Activated T-helper 1 cell treated with anti-CD3 and anti-CD28 coated beads, Interleukin-12 subunit alpha, Interleukin-12 subunit beta, Interleukin-2, Interleukin-4 antibody, amounts not matched to agents 30 ng/mL and 10 ng/mL and 1 ng/mL, durations not matched to agents 14 hours and 24 hours and 36 hours (primary cell): ENCODE measurements at regions of chr4 and their contacts with region 1.

Region 1: DNA sequence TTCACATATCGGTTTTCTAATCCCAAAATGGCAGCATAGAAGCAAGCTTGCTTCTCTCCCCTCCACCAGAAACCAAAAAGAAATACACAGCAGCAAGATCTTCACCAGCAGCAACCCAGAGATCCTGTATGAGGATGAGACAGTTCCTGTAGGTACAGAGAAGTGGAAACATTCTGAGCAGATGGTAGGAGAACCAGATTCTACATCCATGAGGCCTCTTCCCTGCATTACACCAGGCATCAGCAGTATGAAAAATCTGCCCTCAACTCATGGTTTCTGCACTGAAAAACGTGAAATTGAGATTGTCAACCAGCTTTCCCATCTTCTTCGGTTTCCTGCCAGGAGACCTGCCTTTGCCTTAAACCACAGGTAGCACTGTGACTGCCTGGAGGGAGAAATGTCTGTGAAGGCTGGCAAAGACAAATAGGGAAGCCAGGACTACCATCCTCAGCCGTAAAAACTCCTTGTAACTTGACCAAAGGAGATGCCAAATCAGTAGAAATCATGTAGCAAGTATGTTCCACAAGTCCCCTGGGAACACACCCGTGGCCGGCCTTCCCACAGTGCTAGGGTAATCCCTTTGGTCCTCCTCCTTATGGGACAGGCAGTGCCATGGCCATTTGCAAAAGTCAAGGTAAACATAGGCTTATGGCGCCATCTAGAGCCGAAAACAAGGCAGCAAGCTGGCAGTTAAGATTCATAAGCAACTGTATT is 24.0 kb upstream of the MTHFD2L start:
- DNase-seq: peak; percentile 28
- H3K4me3 Mint-ChIP-seq: no peak overlapping the region
- H3K27ac Mint-ChIP-seq: no peak overlapping the region
- H3K4me1 Mint-ChIP-seq: no peaks in the 10 kb centered on the region
- H3K27me3 Mint-ChIP-seq: peaks cover 12% of the 10 kb centered on the region

Region 2: GRCh38 chr4:73311428-73311827 is 822.5 kb before region 1 on chr4:
- intact Hi-C with region 1: loop called (anchors 2 kb)
- DNase-seq: no peak
- H3K4me3 Mint-ChIP-seq: no peak overlapping the region
- H3K27ac Mint-ChIP-seq: no peak overlapping the region
- H3K4me1 Mint-ChIP-seq: no peaks in the 10 kb centered on the region
- H3K27me3 Mint-ChIP-seq: no peaks in the 10 kb centered on the region

Region 3: GRCh38 chr4:73593631-73594241 is 540.2 kb before region 1 on chr4:
- intact Hi-C with region 1: loop called (anchors 1 kb)
- DNase-seq: no peak
- H3K4me3 Mint-ChIP-seq: no peak overlapping the region
- H3K27ac Mint-ChIP-seq: no peak overlapping the region
- H3K4me1 Mint-ChIP-seq: no peaks in the 10 kb centered on the region
- H3K27me3 Mint-ChIP-seq: no peaks in the 10 kb centered on the region

Region 4: GRCh38 chr4:74283614-74284013 is 149.7 kb after region 1 on chr4:
- intact Hi-C with region 1: no loop called
- DNase-seq: no peak
- H3K4me3 Mint-ChIP-seq: no peak overlapping the region
- H3K27ac Mint-ChIP-seq: no peak overlapping the region
- H3K4me1 Mint-ChIP-seq: no peaks in the 10 kb centered on the region
- H3K27me3 Mint-ChIP-seq: no peaks in the 10 kb centered on the region